MCF 10A (cell line): ENCODE measurements at regions of chr9 and their contacts with region 1.

Region 1: DNA sequence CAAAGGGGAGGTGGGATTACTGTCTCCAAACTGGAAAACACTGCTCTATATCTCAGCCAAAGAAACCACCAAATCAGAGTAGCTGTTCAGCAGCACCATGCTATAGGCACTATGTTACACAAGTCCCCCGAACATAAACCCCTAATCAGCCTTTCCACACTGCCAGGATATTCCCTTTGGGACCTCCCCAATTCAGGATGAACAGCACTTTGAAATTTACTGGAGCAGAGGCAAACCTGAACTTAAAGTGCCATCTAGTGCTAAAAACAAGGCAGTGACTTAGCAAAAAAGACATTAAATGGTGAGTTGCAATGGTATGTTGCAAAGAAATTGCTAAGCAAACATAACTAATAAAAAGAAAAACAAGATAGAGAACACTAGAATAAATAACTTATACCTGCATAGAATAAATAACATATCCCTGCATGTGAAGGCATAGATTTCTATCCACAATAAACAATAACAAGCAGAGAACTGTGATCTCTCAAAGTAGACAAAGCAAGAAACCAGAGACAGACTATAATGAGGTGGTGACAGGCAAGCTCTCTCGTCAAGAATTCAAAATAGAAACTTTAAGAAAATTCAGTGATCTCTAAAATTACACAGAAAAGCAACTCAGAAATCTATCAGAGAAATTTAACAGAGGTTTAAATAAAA is 584.4 kb upstream of the ACO1 start:
- DNase-seq: peak; percentile 53
- H3K4me3 Mint-ChIP-seq: no peak overlapping the region
- H3K27ac Mint-ChIP-seq: no peak overlapping the region
- H3K4me1 Mint-ChIP-seq: no peaks in the 10 kb centered on the region
- H3K27me3 Mint-ChIP-seq: peaks cover 48% of the 10 kb centered on the region
- CTCF ChIP-seq: peak; percentile 72

Region 2: DNA sequence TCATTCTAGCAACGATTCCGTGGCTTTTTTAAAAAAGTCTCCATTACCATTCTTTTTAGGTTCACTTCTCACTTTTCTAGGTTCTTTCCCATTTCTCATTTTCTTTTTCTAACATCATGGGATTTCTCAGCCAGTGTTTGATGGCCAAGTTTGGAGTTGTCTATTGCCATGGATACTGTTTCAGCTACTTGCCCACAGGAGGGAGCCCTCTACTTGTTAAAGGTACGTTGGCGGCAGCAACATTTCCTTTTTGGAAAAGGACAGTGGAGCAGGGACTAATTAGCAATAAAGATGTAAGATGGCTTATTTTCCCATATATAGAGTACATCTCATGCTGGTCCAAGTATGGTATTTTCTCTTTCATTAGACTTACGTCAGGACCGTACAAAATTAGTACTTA is 1969.3 kb before region 1 on chr9:
- CTCF ChIA-PET with region 1: no interaction called
- POLR2A ChIA-PET with region 1: no interaction called
- intact Hi-C with region 1: loop called (anchors 1 kb)
- DNase-seq: peak; percentile 61
- H3K4me3 Mint-ChIP-seq: no peak overlapping the region
- H3K27ac Mint-ChIP-seq: no peak overlapping the region
- H3K4me1 Mint-ChIP-seq: peaks cover 5% of the 10 kb centered on the region
- H3K27me3 Mint-ChIP-seq: no peaks in the 10 kb centered on the region
- CTCF ChIP-seq: peak; percentile 76

Region 3: DNA sequence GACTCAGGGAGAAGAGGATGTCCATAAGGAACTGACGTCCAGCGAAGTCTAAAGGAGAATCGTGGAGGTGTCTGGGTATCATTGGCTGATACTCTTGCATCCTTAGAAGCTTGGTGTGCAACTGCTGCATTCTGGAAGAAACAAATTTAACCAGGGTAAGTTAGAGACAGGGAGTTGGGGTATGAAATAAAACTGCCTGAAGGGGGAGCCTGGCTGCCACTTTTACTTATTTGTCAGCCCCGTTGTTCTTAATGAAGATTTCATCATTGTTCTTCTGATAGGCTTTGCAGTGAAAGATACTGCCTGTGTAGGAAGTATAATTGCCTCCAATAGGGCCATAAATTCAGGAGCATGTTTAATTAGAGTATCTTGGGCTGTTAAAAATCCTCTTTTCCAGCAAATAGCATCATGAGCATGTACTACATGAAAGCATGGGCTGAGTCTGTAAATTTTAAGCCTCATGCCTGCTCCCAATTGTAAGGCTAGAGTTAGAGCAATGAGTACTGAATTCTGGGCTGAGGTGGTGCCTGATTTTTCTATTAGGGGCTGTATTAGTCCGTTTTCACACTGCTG is 680.1 kb before region 1 on chr9:
- CTCF ChIA-PET with region 1: interaction called, 6 read pairs
- POLR2A ChIA-PET with region 1: no interaction called
- intact Hi-C with region 1: loop called (anchors 1 kb)
- DNase-seq: peak; percentile 58
- H3K4me3 Mint-ChIP-seq: no peak overlapping the region
- H3K27ac Mint-ChIP-seq: no peak overlapping the region
- H3K4me1 Mint-ChIP-seq: peaks cover 5% of the 10 kb centered on the region
- H3K27me3 Mint-ChIP-seq: peaks cover 2% of the 10 kb centered on the region
- CTCF ChIP-seq: peak; percentile 50

Region 4: DNA sequence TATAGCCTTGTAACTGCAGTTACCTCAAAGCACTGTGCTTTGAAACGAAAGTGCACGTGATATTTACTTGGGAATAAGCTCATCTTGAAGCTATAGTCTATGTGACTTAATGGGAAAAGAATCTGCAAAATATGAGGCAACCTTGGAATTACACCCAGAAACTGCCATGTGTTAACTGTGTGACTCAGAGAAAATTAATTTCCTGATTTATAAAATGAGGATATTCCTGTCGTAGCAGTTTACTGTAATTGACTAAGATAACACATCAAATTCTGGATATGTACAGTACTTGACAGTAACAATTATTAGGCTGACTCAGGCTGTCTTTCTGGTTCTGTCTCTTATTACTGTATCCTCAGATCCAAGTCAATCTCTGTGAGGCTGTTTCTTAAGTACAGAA is 495.5 kb before region 1 on chr9:
- CTCF ChIA-PET with region 1: interaction called, 6 read pairs
- POLR2A ChIA-PET with region 1: no interaction called
- intact Hi-C with region 1: loop called (anchors 1 kb)
- DNase-seq: peak; percentile 84
- H3K4me3 Mint-ChIP-seq: peak overlapping the region; percentile 33
- H3K27ac Mint-ChIP-seq: peak overlapping the region; percentile 88
- H3K4me1 Mint-ChIP-seq: peaks cover 8% of the 10 kb centered on the region
- H3K27me3 Mint-ChIP-seq: no peaks in the 10 kb centered on the region
- CTCF ChIP-seq: no peak

Region 5: GRCh38 chr9:31542384-31543055 is 257.6 kb before region 1 on chr9:
- CTCF ChIA-PET with region 1: no interaction called
- POLR2A ChIA-PET with region 1: no interaction called
- intact Hi-C with region 1: loop called (anchors 10 kb)
- DNase-seq: peak; percentile 76
- H3K4me3 Mint-ChIP-seq: peak overlapping the region; percentile 12
- H3K27ac Mint-ChIP-seq: peak overlapping the region; percentile 49
- H3K4me1 Mint-ChIP-seq: peaks cover 14% of the 10 kb centered on the region
- H3K27me3 Mint-ChIP-seq: no peaks in the 10 kb centered on the region
- CTCF ChIP-seq: peak; percentile 42

Region 6: DNA sequence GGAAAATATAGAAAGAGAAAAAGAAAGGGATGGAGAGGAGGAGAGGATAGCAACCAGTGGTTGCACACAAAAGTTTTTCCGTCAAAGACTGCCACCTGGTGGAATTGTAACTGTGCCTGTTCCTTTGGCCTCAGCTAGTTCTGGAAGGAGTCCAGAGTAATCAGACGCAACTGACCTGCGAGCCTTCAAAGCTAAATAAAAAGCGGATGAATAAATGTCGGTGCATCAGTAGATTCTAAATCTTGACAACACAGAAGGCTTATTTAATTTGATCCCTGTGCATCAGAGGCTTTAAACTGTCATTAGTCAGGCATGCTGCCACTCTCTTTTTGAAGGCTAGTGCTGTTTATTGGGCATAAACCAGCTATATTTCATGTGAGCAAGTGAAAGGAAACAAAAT is 451.5 kb after region 1 on chr9:
- CTCF ChIA-PET with region 1: interaction called, 3 read pairs
- POLR2A ChIA-PET with region 1: no interaction called
- intact Hi-C with region 1: loop called (anchors 5 kb)
- DNase-seq: peak; percentile 85
- H3K4me3 Mint-ChIP-seq: no peak overlapping the region
- H3K27ac Mint-ChIP-seq: no peak overlapping the region
- H3K4me1 Mint-ChIP-seq: no peaks in the 10 kb centered on the region
- H3K27me3 Mint-ChIP-seq: peaks cover 65% of the 10 kb centered on the region
- CTCF ChIP-seq: peak; percentile 65

Region 7: DNA sequence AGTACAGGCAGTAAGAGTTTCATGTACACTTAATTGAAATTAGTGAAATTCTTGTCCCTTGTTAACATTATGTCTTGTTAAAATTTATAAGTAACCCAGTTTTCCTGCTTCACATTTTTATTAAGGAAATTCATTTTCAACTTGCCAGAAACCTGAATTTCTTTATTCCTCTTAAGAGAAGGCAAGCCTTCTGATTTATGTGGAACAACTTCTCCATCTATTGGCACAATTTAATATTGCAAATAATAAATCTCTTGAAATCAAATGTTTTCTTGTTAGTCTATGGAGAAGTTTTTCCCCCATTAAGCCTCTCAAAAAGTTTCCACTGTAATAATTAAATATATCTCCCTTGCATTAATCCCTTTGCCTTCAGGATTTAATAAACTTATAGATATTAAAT is 550.6 kb after region 1 on chr9:
- CTCF ChIA-PET with region 1: interaction called, 3 read pairs
- POLR2A ChIA-PET with region 1: no interaction called
- intact Hi-C with region 1: loop called (anchors 10 kb)
- DNase-seq: peak; percentile 33
- H3K4me3 Mint-ChIP-seq: no peak overlapping the region
- H3K27ac Mint-ChIP-seq: no peak overlapping the region
- H3K4me1 Mint-ChIP-seq: no peaks in the 10 kb centered on the region
- H3K27me3 Mint-ChIP-seq: peaks cover 6% of the 10 kb centered on the region
- CTCF ChIP-seq: peak; percentile 28